ENCODE measurements at regions of chr1 and their contacts with region 1.

Region 1: GRCh38 chr1:89598450-89599331 is 34.2 kb upstream of the LRRC8C start:
- DNase-seq: no peak
- H3K4me3 ChIP-seq: no peak overlapping the region
- H3K27ac ChIP-seq: no peak overlapping the region
- H3K4me1 ChIP-seq: peaks cover 3 to 15% of the 10 kb centered on the region in 2 donors
- H3K27me3 ChIP-seq: no peaks in the 10 kb centered on the region
- CTCF ChIP-seq: peak; percentile 49 to 83 (median 69)
- POLR2A ChIP-seq: no peak

Region 2: DNA sequence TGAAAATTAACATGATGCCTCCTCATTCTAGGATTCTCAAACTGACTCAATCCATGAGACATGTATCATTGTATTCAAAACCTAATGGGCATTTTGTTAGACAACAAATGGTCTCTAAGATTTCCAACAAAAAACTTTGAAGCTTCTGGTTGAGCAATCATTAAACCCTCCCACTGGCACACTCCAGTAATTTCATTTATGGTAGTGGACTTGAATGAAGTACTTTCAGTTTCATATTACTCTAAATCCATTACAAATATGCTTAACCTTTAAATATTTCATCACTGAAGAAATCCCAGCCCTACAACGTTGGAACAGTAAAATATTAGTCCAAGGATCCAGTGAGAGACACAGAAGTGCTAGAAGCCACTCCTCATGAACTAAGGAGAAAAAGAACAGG is 191.3 kb before region 1 on chr1:
- intact Hi-C with region 1: no loop called
- DNase-seq: peak in 1 of 7 donors; percentile 18
- H3K4me3 ChIP-seq: peak overlapping the region in 2 of 4 donors; percentile 8 to 55
- H3K27ac ChIP-seq: peak overlapping the region in 1 of 5 donors; percentile 36
- H3K4me1 ChIP-seq: peaks cover 0 to 3% of the 10 kb centered on the region in 2 donors
- H3K27me3 ChIP-seq: no peaks in the 10 kb centered on the region
- CTCF ChIP-seq: no peak
- POLR2A ChIP-seq: no peak

Region 3: GRCh38 chr1:89476072-89476471 is 122.6 kb before region 1 on chr1:
- intact Hi-C with region 1: loop called in 1 of 2 experiments (anchors 5 kb)
- DNase-seq: no peak
- H3K4me3 ChIP-seq: no peak overlapping the region
- H3K27ac ChIP-seq: no peak overlapping the region
- H3K4me1 ChIP-seq: no peaks in the 10 kb centered on the region
- H3K27me3 ChIP-seq: no peaks in the 10 kb centered on the region
- CTCF ChIP-seq: no peak
- POLR2A ChIP-seq: no peak

Measured in adrenal gland (tissue), 19 donors.